Posterior vena cava (tissue), 2 donors: ENCODE measurements at regions of chr1 and their contacts with region 1.

Region 1: GRCh38 chr1:22105611-22106207 is 37.2 kb downstream of the WNT4 start:
- DNase-seq: no peak

Region 2: GRCh38 chr1:22143065-22144036 is 37.6 kb after region 1 on chr1 and contains the start of gene WNT4:
- intact Hi-C with region 1: loop called in 1 of 2 experiments (anchors 5 kb)
- DNase-seq: no peak
- total RNA-seq, gene WNT4: 0.10 to 0.32 TPM

Region 3: GRCh38 chr1:22153660-22154437 is 48.1 kb after region 1 on chr1:
- intact Hi-C with region 1: no loop called
- DNase-seq: no peak

Region 4: GRCh38 chr1:22275721-22276395 is 170.1 kb after region 1 on chr1:
- intact Hi-C with region 1: loop called in 1 of 2 experiments (anchors 5 kb)
- DNase-seq: peak; percentile 79